Lower leg skin (tissue), 4 donors: ENCODE measurements at regions of chr9 and their contacts with region 1.

Region 1: DNA sequence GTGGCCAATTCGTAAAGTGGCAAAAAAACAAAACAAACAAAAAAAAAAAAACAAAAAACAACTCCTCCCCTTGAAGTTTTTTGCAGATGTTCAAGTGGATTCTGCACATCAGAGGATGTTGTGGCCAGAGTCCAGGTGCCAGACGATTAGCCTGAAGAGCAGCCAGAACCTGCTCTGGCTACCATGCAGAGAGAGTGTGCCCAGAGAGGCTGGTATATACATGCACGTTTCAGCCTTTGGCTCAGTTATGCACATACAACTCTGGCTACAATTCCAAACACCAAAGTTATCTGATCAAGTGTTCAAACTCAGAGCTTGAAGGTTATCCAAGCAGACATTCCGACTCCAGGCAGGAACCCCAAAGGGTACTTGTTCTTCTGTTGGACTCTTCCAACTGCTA is 34.7 kb downstream of the GGTA1 start:
- DNase-seq: peak in 1 of 2 donors; percentile 82
- H3K4me3 ChIP-seq: no peak overlapping the region
- CTCF ChIP-seq: no peak
- POLR2A ChIP-seq: no peak

Region 2: GRCh38 chr9:121698627-121699570 is 233.9 kb after region 1 on chr9:
- intact Hi-C with region 1: loop called (anchors 5 kb)
- DNase-seq: peak; percentile 45 to 92
- H3K4me3 ChIP-seq: peak overlapping the region; percentile 37
- CTCF ChIP-seq: no peak
- POLR2A ChIP-seq: no peak